ENCODE measurements at regions of chr4 and their contacts with region 1.

Region 1: GRCh38 chr4:169902658-169903345 is 123.4 kb downstream of the MFAP3L start:
- DNase-seq: no peak
- ATAC-seq: peak in 1 of 2 donors; percentile 62
- H3K4me3 ChIP-seq: no peak overlapping the region
- H3K27ac ChIP-seq: no peak overlapping the region
- H3K4me1 ChIP-seq: no peaks in the 10 kb centered on the region
- H3K27me3 ChIP-seq: no peaks in the 10 kb centered on the region
- CTCF ChIP-seq: peak in 2 of 5 experiments; percentile 15 to 25
- POLR2A ChIP-seq: no peak

Region 2: GRCh38 chr4:169634975-169635374 is 267.8 kb before region 1 on chr4:
- in situ Hi-C with region 1: no loop called
- intact Hi-C with region 1: no loop called
- DNase-seq: no peak
- ATAC-seq: no peak
- H3K4me3 ChIP-seq: no peak overlapping the region
- H3K27ac ChIP-seq: no peak overlapping the region
- H3K4me1 ChIP-seq: peaks cover 0 to 4% of the 10 kb centered on the region in 2 donors
- H3K27me3 ChIP-seq: no peaks in the 10 kb centered on the region
- CTCF ChIP-seq: no peak
- POLR2A ChIP-seq: no peak

Region 3: GRCh38 chr4:170008371-170008770 is 105.6 kb after region 1 on chr4:
- in situ Hi-C with region 1: no loop called
- intact Hi-C with region 1: loop called (anchors 10 kb)
- DNase-seq: no peak
- ATAC-seq: no peak
- H3K4me3 ChIP-seq: no peak overlapping the region
- H3K27ac ChIP-seq: no peak overlapping the region
- H3K4me1 ChIP-seq: peaks cover 5 to 61% of the 10 kb centered on the region in 2 donors
- H3K27me3 ChIP-seq: no peaks in the 10 kb centered on the region
- CTCF ChIP-seq: no peak
- POLR2A ChIP-seq: no peak

Region 4: GRCh38 chr4:170022211-170022610 is 119.4 kb after region 1 on chr4:
- in situ Hi-C with region 1: no loop called
- intact Hi-C with region 1: no loop called
- DNase-seq: no peak
- ATAC-seq: no peak
- H3K4me3 ChIP-seq: no peak overlapping the region
- H3K27ac ChIP-seq: no peak overlapping the region
- H3K4me1 ChIP-seq: peaks cover 4 to 32% of the 10 kb centered on the region in 2 donors
- H3K27me3 ChIP-seq: no peaks in the 10 kb centered on the region
- CTCF ChIP-seq: no peak
- POLR2A ChIP-seq: no peak

Region 5: GRCh38 chr4:170047771-170048354 is 145.1 kb after region 1 on chr4:
- in situ Hi-C with region 1: loop called in 1 of 4 experiments (anchors 10 kb)
- intact Hi-C with region 1: loop called (anchors 5 kb)
- DNase-seq: peak in 1 of 2 donors; percentile 15
- ATAC-seq: no peak
- H3K4me3 ChIP-seq: no peak overlapping the region
- H3K27ac ChIP-seq: no peak overlapping the region
- H3K4me1 ChIP-seq: no peaks in the 10 kb centered on the region
- H3K27me3 ChIP-seq: no peaks in the 10 kb centered on the region
- CTCF ChIP-seq: peak; percentile 67 to 80 (median 71)
- POLR2A ChIP-seq: no peak

Measured in gastrocnemius medialis (tissue), 4 donors.